A673 (cell line): ENCODE measurements at regions of chr6 and their contacts with region 1.

Region 1: DNA sequence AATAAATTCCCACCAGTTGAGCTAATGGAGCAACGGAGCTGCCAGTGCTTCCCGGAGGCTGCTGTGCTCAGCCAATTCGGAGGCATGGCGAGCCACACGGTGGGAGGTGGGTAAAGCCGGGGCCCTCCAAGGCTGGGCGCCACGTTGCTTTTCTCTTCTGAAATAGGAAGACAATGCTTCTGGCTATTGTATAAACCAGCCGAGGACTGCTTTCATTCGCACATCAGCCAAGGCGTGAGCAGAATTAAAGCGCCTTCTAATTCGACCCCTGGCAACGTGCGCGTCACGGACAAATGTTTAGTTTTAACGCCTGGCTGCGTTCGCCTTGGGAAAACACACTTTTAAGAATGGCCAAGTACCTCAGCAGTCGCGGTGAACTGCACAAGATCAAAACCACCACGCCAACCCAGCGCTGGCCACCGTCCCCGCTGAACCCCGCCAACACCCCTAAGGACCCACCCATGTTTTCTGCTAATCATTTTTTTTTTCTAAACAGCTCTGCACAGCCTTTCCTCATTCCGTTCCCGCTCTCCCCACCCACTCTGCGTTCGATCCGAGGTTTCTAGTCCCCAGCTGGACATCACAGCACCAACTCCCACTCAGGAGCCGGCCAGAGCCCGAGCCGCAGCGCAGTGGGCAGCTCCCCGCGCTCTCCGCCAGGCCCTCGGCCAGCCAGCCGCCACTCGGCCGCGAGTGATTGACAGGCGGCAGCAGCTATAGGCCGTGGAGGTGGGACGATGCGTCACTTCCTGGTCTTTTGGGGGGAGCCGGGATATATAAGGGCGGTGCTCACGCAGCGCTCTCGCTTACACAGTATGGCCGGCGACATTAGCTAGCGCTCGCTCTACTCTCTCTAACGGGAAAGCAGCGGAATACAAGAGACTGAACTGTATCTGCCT is at the start of gene AMD1:
- DNase-seq: peak; percentile 97
- H3K4me3 ChIP-seq: peak within 1 kb of the TSS; percentile 96
- H3K27ac ChIP-seq: peak within 1 kb of the TSS; percentile 92
- H3K4me1 ChIP-seq: peaks cover 24% of the 10 kb centered on the region
- H3K27me3 ChIP-seq: no peaks in the 10 kb centered on the region
- CTCF ChIP-seq: no peak
- total RNA-seq, gene AMD1: 73.3 and 87.6 TPM in 2 replicates

Region 2: DNA sequence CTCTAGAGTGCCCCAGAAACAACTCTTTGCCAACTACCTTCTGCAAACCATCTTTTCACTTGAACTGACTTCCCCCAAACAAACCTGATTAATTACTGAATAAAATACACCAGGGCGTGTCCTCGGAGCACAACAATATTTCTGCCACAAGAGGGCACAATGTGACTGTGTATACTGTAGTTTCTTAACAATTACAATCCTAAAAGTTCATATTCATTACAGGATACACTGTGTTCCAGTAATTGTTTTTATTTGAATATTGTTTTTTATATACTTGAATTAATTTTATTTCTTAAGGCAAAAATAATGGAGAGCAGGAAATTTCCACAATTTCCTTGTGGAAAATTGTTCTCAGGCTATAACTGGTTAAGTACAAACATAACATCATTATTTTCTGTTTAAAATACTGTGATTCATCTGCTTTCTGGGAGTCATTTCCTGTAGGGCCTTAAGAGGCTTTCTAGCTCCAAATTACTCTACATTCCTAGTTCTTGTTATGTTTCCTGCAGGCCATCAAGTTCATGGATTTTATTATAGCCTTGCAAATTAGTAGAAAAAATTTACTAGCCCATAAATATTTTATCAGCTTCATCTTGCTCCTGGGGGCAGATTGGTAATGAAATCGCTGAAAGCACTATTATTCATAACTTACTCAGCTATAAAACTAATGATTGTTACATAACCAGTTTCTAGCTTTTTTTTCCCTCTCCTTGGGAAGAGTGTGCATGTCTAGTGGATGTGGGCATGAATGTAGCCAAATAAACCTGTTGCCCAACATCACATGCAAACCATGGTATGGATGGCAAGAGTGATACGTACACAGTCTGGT is 345.9 kb before region 1 on chr6:
- CTCF ChIA-PET with region 1: no interaction called
- POLR2A ChIA-PET with region 1: no interaction called
- intact Hi-C with region 1: loop called (anchors 5 kb)
- DNase-seq: peak; percentile 95
- H3K4me3 ChIP-seq: no peak overlapping the region
- H3K27ac ChIP-seq: peak overlapping the region; percentile 3
- H3K4me1 ChIP-seq: peaks cover 21% of the 10 kb centered on the region
- H3K27me3 ChIP-seq: peaks cover 27% of the 10 kb centered on the region
- CTCF ChIP-seq: peak; percentile 93

Region 3: GRCh38 chr6:110682460-110682853 is 191.8 kb before region 1 on chr6:
- CTCF ChIA-PET with region 1: interaction called, 3 read pairs
- POLR2A ChIA-PET with region 1: no interaction called
- intact Hi-C with region 1: loop called (anchors 1 kb)
- DNase-seq: peak; percentile 87
- H3K4me3 ChIP-seq: no peak overlapping the region
- H3K27ac ChIP-seq: no peak overlapping the region
- H3K4me1 ChIP-seq: no peaks in the 10 kb centered on the region
- H3K27me3 ChIP-seq: no peaks in the 10 kb centered on the region
- CTCF ChIP-seq: peak; percentile 77

Region 4: DNA sequence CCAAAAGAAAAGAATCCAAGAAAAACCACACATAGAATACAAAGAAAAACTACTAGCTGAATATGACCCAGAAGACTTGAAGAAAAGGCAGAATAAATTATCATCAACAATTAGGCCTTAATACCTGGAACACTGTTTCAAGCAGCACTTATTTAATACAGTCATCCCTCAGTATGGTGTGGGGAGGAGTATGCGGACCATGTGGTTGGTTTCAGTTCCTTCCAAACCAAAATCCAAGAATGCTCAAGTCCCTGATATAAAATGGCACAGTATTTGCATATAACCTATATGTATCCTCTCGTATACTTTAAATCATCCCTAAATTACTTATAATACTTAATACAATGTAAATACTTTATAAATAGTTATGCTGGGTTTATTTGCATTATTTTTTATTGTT is 75.0 kb before region 1 on chr6:
- CTCF ChIA-PET with region 1: no interaction called
- POLR2A ChIA-PET with region 1: interaction called, 18 read pairs
- intact Hi-C with region 1: no loop called
- DNase-seq: no peak
- H3K4me3 ChIP-seq: no peak overlapping the region
- H3K27ac ChIP-seq: no peak overlapping the region
- H3K4me1 ChIP-seq: no peaks in the 10 kb centered on the region
- H3K27me3 ChIP-seq: no peaks in the 10 kb centered on the region
- CTCF ChIP-seq: no peak

Region 5: DNA sequence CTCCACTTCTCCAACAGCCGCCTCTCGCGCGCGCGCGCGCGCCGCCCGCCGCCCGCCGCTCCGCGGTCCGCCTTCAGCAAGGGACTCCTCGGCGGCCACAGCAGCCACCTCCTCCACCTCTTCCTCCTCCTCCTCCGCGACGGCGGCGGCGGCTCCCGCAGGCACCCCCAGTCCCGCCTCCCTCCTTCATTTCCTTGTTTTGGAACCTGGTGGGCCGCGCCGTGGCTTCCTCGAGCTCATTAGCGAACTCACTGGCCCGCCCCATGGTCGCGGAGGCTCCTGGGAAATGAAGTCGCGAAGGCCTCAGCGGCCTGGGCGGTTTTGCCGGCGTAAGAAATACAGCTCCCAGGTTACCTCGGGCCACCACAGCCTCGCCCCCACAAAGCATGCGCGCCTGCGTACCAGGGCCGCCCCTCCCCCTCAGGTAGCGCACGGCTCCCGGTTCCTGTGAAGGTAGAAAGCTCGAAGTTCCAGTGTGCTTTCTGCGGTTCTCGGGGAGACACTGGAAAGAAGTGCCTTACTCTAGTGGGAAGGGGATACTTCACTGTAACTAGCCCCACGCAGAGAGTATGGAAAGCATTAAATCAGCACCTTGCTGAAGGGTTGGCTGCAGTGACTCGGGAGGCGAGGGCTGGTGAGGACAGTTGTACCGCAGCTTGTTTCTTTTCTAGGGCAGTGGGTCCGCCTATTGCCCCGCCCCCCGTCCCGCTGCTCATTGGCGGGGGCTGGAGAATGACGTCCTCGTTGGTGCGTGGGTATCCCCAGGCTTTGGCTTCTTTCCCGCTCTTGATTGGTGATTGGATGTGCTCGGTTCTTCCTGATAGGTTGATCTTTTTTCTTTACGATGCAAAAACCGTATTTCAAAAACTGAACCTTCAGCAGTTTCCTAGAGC is 58.8 kb before region 1 on chr6 and contains the start of gene CDK19:
- CTCF ChIA-PET with region 1: no interaction called
- POLR2A ChIA-PET with region 1: interaction called, 32 read pairs
- intact Hi-C with region 1: loop called (anchors 2 kb)
- DNase-seq: peak; percentile 99
- H3K4me3 ChIP-seq: peak within 1 kb of the TSS; percentile 74
- H3K27ac ChIP-seq: peak within 1 kb of the TSS; percentile 97
- H3K4me1 ChIP-seq: peaks cover 10% of the 10 kb centered on the region
- H3K27me3 ChIP-seq: no peaks in the 10 kb centered on the region
- CTCF ChIP-seq: no peak
- total RNA-seq, gene CDK19: 23.7 and 27.4 TPM in 2 replicates

Region 6: GRCh38 chr6:110884321-110884720 is 10.1 kb after region 1 on chr6:
- CTCF ChIA-PET with region 1: no interaction called
- POLR2A ChIA-PET with region 1: interaction called, 11 read pairs
- intact Hi-C with region 1: no loop called
- DNase-seq: no peak
- H3K4me3 ChIP-seq: no peak overlapping the region
- H3K27ac ChIP-seq: no peak overlapping the region
- H3K4me1 ChIP-seq: peaks cover 37% of the 10 kb centered on the region
- H3K27me3 ChIP-seq: no peaks in the 10 kb centered on the region
- CTCF ChIP-seq: no peak

Region 7: DNA sequence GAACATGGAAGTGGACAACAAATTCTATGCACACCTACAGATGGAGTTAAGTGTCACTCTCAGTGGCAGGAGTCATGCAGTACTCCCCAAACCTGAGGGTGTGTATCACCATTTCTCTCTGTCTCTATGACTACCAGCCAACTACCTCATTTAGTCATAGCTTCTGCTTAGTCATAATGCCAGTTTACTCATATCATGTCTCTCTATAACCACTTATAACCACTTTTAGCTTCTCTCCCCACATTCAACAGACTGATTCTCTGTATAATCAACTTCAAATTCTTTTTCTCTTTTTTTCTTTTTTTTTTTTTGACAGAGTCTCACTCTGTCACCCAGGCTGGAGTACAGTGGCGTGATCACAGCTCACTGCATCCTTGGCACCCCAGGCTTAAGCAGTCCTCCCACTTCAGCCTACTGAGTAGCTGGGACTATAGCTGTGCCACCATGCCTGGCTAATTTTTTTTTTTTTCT is 70.5 kb after region 1 on chr6:
- CTCF ChIA-PET with region 1: no interaction called
- POLR2A ChIA-PET with region 1: interaction called, 11 read pairs
- intact Hi-C with region 1: no loop called
- DNase-seq: no peak
- H3K4me3 ChIP-seq: no peak overlapping the region
- H3K27ac ChIP-seq: no peak overlapping the region
- H3K4me1 ChIP-seq: no peaks in the 10 kb centered on the region
- H3K27me3 ChIP-seq: no peaks in the 10 kb centered on the region
- CTCF ChIP-seq: no peak

Region 8: DNA sequence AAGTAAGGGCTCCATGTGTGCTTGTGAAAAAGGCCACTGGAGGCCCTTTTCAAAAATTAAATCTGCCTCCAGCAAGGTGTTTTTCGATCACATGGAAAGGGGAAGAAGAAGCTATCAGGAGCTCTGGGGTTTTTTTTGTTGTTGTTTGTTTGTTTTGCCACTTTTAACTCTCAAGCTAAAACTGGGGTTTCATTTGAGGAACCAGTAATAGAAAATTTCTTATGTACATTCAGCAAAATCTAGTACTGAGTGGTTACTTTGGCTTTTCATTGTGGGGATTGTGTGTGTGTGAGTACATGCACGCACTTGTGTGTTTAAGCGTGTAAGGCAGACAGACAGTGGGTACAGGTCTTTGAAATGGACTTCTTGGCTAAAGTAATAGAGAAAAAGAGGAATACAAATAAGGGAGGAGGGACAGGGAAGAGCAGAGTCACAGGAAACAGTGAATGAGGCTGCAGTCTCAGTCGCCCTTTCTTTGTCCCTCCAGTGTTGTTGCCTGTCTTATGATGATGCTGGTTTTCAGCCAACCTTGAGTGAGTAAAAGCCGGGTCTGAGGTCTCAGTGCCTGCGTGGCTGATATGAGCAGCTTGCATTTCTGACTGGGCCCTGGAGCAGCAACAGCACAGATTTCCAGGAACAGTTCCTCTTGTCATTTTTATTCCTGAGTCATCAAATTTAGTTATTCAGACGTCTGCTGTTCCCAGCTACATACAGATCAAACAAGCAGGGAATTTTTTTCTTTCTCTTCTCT is 239.3 kb after region 1 on chr6:
- CTCF ChIA-PET with region 1: no interaction called
- POLR2A ChIA-PET with region 1: no interaction called
- intact Hi-C with region 1: no loop called
- DNase-seq: no peak
- H3K4me3 ChIP-seq: no peak overlapping the region
- H3K27ac ChIP-seq: no peak overlapping the region
- H3K4me1 ChIP-seq: peaks cover 4% of the 10 kb centered on the region
- H3K27me3 ChIP-seq: no peaks in the 10 kb centered on the region
- CTCF ChIP-seq: no peak